AG04449 (cell line): ENCODE measurements at regions of chr9 and their contacts with region 1.

Region 1: GRCh38 chr9:114906908-114907571 is 23.4 kb downstream of the TNFSF8 start:
- DNase-seq: no peak
- H3K4me3 ChIP-seq: no peak overlapping the region
- CTCF ChIP-seq: peak; percentile 75

Region 2: GRCh38 chr9:114662081-114662989 is 244.7 kb before region 1 on chr9:
- CTCF ChIA-PET with region 1: interaction called, 156 read pairs
- POLR2A ChIA-PET with region 1: no interaction called
- DNase-seq: no peak
- H3K4me3 ChIP-seq: no peak overlapping the region
- CTCF ChIP-seq: peak; percentile 76

Region 3: GRCh38 chr9:114681594-114682332 is 225.3 kb before region 1 on chr9 and contains the start of gene TEX48:
- CTCF ChIA-PET with region 1: interaction called, 333 read pairs
- POLR2A ChIA-PET with region 1: interaction called, 4 read pairs
- DNase-seq: no peak
- H3K4me3 ChIP-seq: no peak within 1 kb of the TSS
- CTCF ChIP-seq: peak; percentile 74

Region 4: GRCh38 chr9:114721491-114722079 is 185.5 kb before region 1 on chr9:
- CTCF ChIA-PET with region 1: interaction called, 21 read pairs
- POLR2A ChIA-PET with region 1: no interaction called
- DNase-seq: no peak
- H3K4me3 ChIP-seq: no peak overlapping the region; the same call in 1 of the 2 replicates
- CTCF ChIP-seq: no peak

Region 5: DNA sequence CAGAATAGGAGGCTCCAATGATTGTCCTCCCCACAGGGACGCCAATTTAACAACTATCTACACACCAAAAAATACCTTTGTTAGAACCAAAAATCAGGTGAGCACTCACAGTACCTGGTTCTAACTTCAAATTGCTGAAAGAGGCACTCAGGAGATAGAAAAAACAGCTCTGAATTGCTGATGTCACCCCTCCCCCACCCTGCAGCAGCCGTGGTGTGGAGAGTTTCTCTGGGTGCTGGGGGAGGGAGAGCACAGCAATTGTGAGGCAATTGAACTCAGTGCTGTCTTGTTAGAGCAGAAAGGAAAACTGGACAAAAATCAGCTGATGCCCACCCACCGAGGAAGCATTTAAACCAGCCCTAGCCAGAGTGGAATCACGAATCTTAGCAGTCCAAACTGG is 18.4 kb before region 1 on chr9:
- CTCF ChIA-PET with region 1: interaction called, 16 read pairs
- POLR2A ChIA-PET with region 1: no interaction called
- DNase-seq: no peak
- H3K4me3 ChIP-seq: no peak overlapping the region
- CTCF ChIP-seq: no peak

Region 6: GRCh38 chr9:114919611-114920010 is 12.6 kb after region 1 on chr9:
- CTCF ChIA-PET with region 1: interaction called, 31 read pairs
- POLR2A ChIA-PET with region 1: interaction called, 4 read pairs
- DNase-seq: no peak
- H3K4me3 ChIP-seq: no peak overlapping the region
- CTCF ChIP-seq: no peak